MCF 10A (cell line): ENCODE measurements at regions of chr11 and their contacts with region 1.

Region 1: DNA sequence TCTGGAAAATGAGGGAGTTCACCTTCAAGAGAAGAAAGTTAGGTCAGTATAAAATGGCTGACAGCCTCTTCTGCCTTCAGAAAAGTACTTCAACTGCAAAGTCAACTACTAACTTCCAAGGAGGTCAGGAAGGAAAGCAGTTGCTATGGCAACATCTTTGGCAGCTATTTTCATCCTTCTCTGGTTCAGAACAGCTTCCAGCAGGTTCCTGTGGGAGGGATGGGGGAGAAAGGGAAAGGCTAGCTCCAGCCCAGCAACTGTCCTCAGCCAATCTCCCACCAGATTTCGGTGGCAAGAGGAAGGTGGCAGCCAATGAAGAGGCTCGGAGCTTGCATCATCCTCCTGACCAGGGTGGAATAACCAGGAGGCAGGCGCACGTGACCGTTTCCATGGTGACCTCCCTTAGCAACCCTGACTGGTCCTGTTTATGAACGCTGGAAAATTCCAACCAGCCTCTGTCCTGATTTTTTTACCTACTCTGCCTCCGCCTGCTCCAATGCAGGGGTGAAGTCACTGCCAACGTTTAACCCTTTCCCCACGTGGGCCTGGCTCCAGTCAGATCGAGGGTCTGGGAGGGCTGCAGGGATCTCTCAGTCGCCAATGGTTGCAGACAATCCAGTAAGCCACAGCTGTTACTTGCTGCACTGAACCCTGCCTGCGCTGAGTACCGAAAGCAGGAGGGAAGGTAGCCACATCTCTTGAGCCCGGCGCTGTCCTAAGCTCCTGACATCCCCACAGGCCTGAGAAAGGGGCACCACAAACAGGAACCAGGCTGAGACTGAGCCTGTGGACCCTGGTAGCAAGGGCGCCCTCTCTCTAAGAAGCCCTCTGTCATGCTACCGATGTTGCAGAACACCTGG is 11.2 kb upstream of the MALAT1 start:
- DNase-seq: peak; percentile 99
- H3K4me3 Mint-ChIP-seq: peak overlapping the region; percentile 24
- H3K27ac Mint-ChIP-seq: peak overlapping the region; percentile 79
- H3K4me1 Mint-ChIP-seq: peaks cover 47% of the 10 kb centered on the region
- H3K27me3 Mint-ChIP-seq: no peaks in the 10 kb centered on the region
- CTCF ChIP-seq: no peak

Region 2: GRCh38 chr11:65440831-65441499 is 46.7 kb before region 1 on chr11:
- CTCF ChIA-PET with region 1: interaction called, 4 read pairs
- POLR2A ChIA-PET with region 1: interaction called, 130 read pairs
- intact Hi-C with region 1: no loop called
- DNase-seq: peak; percentile 40
- H3K4me3 Mint-ChIP-seq: peak overlapping the region; percentile 41
- H3K27ac Mint-ChIP-seq: peak overlapping the region; percentile 93
- H3K4me1 Mint-ChIP-seq: peaks cover 72% of the 10 kb centered on the region
- H3K27me3 Mint-ChIP-seq: no peaks in the 10 kb centered on the region
- CTCF ChIP-seq: no peak

Region 3: DNA sequence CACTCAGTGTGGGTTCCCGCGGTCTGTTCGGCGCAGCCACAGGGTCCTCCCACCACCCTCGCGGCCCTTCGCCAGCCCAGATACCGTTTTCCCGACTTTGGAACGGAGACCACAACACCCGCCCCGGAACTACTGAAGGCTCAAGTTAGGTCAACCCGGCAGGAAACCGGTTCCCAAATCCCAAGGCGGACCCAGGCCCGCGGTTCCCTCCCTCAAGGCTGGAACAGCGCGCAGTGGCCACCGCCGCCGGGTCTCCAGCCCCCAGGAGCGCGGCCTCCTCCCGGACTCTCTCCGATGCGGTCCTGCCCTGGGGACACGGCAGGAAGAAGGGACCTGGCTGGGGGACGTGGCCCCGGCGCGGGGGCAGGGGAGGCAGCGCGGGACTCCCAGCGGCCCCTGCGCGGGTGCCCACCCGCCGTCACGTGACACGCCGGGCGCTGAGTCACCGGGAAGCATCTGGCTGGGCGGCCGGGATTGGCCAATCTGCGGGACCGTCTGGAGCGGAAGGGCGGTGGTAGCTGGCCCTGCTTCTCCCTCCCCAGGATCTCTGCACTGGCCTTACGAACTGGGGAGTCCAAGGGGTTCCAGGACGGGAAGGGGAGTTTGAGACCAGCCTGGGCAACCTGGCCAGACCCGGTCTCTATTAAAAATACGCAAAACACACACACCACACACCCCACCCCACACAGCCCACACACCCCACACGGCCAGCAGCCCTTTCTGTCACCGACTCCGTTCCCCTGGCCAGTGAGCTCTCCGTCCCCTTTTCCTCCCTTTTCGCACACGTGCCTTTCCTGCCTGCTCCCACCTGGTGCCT is 10.3 kb before region 1 on chr11:
- CTCF ChIA-PET with region 1: interaction called, 26 read pairs
- POLR2A ChIA-PET with region 1: interaction called, 2,284 read pairs
- intact Hi-C with region 1: no loop called
- DNase-seq: peak; percentile 96
- H3K4me3 Mint-ChIP-seq: peak overlapping the region; percentile 95
- H3K27ac Mint-ChIP-seq: peak overlapping the region; percentile 95
- H3K4me1 Mint-ChIP-seq: peaks cover 16% of the 10 kb centered on the region
- H3K27me3 Mint-ChIP-seq: no peaks in the 10 kb centered on the region
- CTCF ChIP-seq: no peak

Region 4: GRCh38 chr11:65546217-65546958 is 58.7 kb after region 1 on chr11:
- CTCF ChIA-PET with region 1: no interaction called
- POLR2A ChIA-PET with region 1: no interaction called
- intact Hi-C with region 1: no loop called
- DNase-seq: peak; percentile 86
- H3K4me3 Mint-ChIP-seq: peak overlapping the region; percentile 42
- H3K27ac Mint-ChIP-seq: no peak overlapping the region
- H3K4me1 Mint-ChIP-seq: peaks cover 10% of the 10 kb centered on the region
- H3K27me3 Mint-ChIP-seq: no peaks in the 10 kb centered on the region
- CTCF ChIP-seq: no peak

Region 5: GRCh38 chr11:65900125-65900898 is 412.7 kb after region 1 on chr11 and contains the start of gene FOSL1:
- CTCF ChIA-PET with region 1: no interaction called
- POLR2A ChIA-PET with region 1: no interaction called
- intact Hi-C with region 1: no loop called
- DNase-seq: peak; percentile 97
- H3K4me3 Mint-ChIP-seq: peak within 1 kb of the TSS; percentile 96
- H3K27ac Mint-ChIP-seq: peak within 1 kb of the TSS; percentile 89
- H3K4me1 Mint-ChIP-seq: peaks cover 56% of the 10 kb centered on the region
- H3K27me3 Mint-ChIP-seq: no peaks in the 10 kb centered on the region
- CTCF ChIP-seq: no peak
- total RNA-seq, gene FOSL1: 95.3 and 124 TPM in 2 replicates